Gastrocnemius medialis (tissue), 4 donors: ENCODE measurements at regions of chr9 and their contacts with region 1.

Region 1: DNA sequence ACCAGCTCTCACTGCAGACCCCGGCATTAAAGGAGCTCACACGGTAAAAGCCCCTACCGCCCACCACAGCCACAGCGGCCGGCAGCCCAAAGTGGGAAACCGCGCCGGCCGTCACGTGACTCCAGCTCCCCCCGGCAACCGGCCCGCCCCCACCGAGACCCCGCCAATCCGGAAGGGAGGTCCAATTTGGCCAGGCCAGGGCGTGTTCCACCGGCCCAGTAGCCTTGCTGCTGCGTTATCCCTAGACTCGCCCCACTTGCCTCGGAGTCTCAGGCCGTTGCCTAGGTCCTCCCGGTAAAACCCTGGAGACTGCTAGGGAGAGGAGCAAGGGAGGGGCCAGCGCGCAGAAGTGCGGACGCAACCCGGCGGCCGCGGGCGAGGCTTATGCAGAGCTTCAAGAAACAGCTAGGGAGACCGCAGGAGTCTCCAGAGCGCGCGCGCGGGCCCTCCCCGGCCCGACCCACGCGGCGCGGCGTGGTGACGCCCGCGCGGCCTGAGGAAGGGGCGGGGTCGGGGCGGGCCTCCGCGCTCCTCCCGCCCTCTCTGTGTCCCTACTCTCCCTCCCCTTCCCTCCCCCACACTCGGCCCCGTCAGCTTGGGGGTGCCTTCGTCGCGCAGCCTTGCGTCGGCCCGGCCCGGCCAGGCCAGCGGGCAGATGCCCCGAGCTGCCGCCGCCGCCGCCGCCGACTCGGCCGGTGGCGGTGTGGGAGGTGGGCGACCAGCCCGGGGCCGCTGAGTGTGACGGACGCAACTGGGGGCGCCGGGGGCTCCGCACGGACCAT is at the start of gene RIC1:
- DNase-seq: peak; percentile 91 to 92
- ATAC-seq: peak; percentile 62 to 63
- H3K4me3 ChIP-seq: peak within 1 kb of the TSS; percentile 70 to 97 (median 94)
- H3K27ac ChIP-seq: peak within 1 kb of the TSS; percentile 89 to 98 (median 93)
- H3K4me1 ChIP-seq: peaks cover 44 to 60% of the 10 kb centered on the region in 2 donors
- H3K27me3 ChIP-seq: no peaks in the 10 kb centered on the region
- CTCF ChIP-seq: peak in 2 of 5 experiments; percentile 29 to 55
- POLR2A ChIP-seq: peak; percentile 99
- total RNA-seq, gene RIC1: 34.0 to 153 (median 37.3) TPM

Region 2: GRCh38 chr9:4679268-4680172 is 949.2 kb before region 1 on chr9 and contains the start of gene CDC37L1:
- in situ Hi-C with region 1: loop called in 1 of 4 experiments (anchors 10 kb)
- intact Hi-C with region 1: loop called (anchors 5 kb)
- DNase-seq: peak; percentile 95 to 96
- ATAC-seq: peak; percentile 76 to 84
- H3K4me3 ChIP-seq: peak within 1 kb of the TSS; percentile 81 to 98 (median 88)
- H3K27ac ChIP-seq: peak within 1 kb of the TSS; percentile 91 to 99 (median 95)
- H3K4me1 ChIP-seq: peaks cover 40 to 44% of the 10 kb centered on the region in 2 donors
- H3K27me3 ChIP-seq: no peaks in the 10 kb centered on the region
- CTCF ChIP-seq: peak; percentile 72 to 88 (median 81)
- POLR2A ChIP-seq: peak; percentile 98 to 99
- total RNA-seq, gene CDC37L1: 91.1 to 157 (median 131) TPM

Region 3: DNA sequence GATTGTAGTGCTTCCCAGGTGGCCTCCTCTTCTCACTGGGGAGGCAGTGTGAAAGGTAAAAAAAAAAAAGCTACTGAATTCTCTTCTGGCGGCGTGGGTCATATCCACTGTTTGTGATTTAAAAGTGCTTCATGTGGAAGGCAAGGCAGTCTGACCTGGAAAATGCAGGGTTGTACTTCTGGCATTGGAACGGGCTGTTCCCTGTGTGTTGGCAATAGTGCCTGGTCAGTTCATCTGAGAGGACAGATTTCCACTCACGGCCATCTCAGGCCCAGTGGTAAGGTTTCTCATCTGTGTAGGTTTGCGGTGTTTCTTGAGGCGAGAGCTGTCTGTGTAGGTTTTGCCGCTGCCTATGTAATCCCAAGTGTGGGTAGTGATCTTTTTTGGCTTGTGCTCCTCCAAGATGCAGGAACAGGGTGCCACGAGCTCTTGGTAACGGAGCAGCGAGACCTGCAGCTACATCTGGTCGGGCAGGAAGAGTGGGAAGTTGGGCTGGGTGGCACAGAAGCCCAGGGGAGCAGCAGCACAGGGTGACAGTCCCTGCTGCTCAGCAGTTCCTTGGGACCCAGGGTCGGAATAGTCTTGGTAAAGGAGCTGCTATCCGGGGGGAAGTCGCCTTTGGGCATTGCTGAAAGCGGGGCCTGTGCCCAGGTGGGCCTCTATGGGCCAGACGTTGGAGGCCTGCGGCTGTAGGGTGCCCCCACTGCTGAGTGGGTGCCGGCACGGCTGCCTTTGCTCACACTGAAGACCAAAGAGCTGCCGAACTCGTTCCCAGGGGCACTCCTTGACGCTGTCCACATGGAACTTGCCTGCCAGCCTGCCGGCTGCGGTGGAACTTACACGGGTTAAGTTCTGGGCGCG is 824.8 kb before region 1 on chr9:
- in situ Hi-C with region 1: loop called in 1 of 4 experiments (anchors 25 kb)
- intact Hi-C with region 1: loop called (anchors 5 kb)
- DNase-seq: peak; percentile 71 to 78
- ATAC-seq: peak; percentile 76 to 83
- H3K4me3 ChIP-seq: peak overlapping the region; percentile 32 to 41 (median 35)
- H3K27ac ChIP-seq: peak overlapping the region; percentile 87 to 96 (median 91)
- H3K4me1 ChIP-seq: peaks cover 46 to 65% of the 10 kb centered on the region in 2 donors
- H3K27me3 ChIP-seq: no peaks in the 10 kb centered on the region
- CTCF ChIP-seq: no peak
- POLR2A ChIP-seq: peak; percentile 21 to 38

Region 4: DNA sequence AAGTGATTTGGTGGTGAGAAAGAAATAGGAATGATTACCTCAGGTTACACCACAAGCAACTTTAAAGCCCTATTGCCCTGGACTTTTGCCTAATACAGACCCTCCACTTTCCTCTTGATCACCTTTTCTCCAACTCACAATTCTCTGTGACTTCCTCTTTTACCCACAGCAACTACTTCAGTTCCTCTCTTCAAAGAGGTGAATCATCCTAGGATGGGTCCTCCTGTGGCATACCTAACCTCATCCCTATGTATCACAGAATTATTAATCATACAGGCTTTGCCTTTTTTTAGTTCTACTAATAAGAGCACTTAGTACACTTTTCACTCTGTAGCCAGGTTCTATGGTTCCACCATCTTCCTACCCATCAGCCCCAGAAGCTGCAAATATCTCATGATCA is 423.6 kb before region 1 on chr9:
- in situ Hi-C with region 1: no loop called
- intact Hi-C with region 1: no loop called
- DNase-seq: no peak
- ATAC-seq: no peak
- H3K4me3 ChIP-seq: no peak overlapping the region
- H3K27ac ChIP-seq: no peak overlapping the region
- H3K4me1 ChIP-seq: no peaks in the 10 kb centered on the region
- H3K27me3 ChIP-seq: no peaks in the 10 kb centered on the region
- CTCF ChIP-seq: no peak
- POLR2A ChIP-seq: no peak

Region 5: GRCh38 chr9:5593904-5594303 is 34.8 kb before region 1 on chr9:
- in situ Hi-C with region 1: no loop called
- intact Hi-C with region 1: no loop called
- DNase-seq: no peak
- ATAC-seq: no peak
- H3K4me3 ChIP-seq: no peak overlapping the region
- H3K27ac ChIP-seq: no peak overlapping the region
- H3K4me1 ChIP-seq: peaks cover 0 to 5% of the 10 kb centered on the region in 2 donors
- H3K27me3 ChIP-seq: no peaks in the 10 kb centered on the region
- CTCF ChIP-seq: no peak
- POLR2A ChIP-seq: no peak

Region 6: GRCh38 chr9:5608298-5609225 is 20.2 kb before region 1 on chr9:
- in situ Hi-C with region 1: no loop called
- intact Hi-C with region 1: loop called (anchors 2 kb)
- DNase-seq: peak; percentile 37 to 41
- ATAC-seq: peak; percentile 87 to 91
- H3K4me3 ChIP-seq: peak overlapping the region; percentile 46 to 56 (median 51)
- H3K27ac ChIP-seq: peak overlapping the region; percentile 77 to 86 (median 84)
- H3K4me1 ChIP-seq: peaks cover 28 to 36% of the 10 kb centered on the region in 2 donors
- H3K27me3 ChIP-seq: no peaks in the 10 kb centered on the region
- CTCF ChIP-seq: no peak
- POLR2A ChIP-seq: no peak

Region 7: GRCh38 chr9:5832543-5833529 is 204.1 kb after region 1 on chr9 and contains the start of gene ERMP1:
- in situ Hi-C with region 1: no loop called
- intact Hi-C with region 1: loop called (anchors 5 kb)
- DNase-seq: peak; percentile 65 to 84
- ATAC-seq: peak; percentile 74 to 91
- H3K4me3 ChIP-seq: peak within 1 kb of the TSS; percentile 63 to 98 (median 69)
- H3K27ac ChIP-seq: peak within 1 kb of the TSS; percentile 66 to 93 (median 87)
- H3K4me1 ChIP-seq: peaks cover 16 to 24% of the 10 kb centered on the region in 2 donors
- H3K27me3 ChIP-seq: no peaks in the 10 kb centered on the region
- CTCF ChIP-seq: peak; percentile 76 to 87 (median 81)
- POLR2A ChIP-seq: peak; percentile 54 to 71
- total RNA-seq, gene ERMP1: 4.4 to 7.4 (median 6.3) TPM

Region 8: GRCh38 chr9:6008169-6008979 is 379.7 kb after region 1 on chr9:
- in situ Hi-C with region 1: loop called in 1 of 4 experiments (anchors 25 kb)
- intact Hi-C with region 1: no loop called
- DNase-seq: peak; percentile 97 to 98
- ATAC-seq: peak; percentile 92 to 94
- H3K4me3 ChIP-seq: peak overlapping the region; percentile 81 to 96 (median 94)
- H3K27ac ChIP-seq: peak overlapping the region; percentile 96 to 99 (median 99)
- H3K4me1 ChIP-seq: peaks cover 56 to 71% of the 10 kb centered on the region in 2 donors
- H3K27me3 ChIP-seq: no peaks in the 10 kb centered on the region
- CTCF ChIP-seq: no peak
- POLR2A ChIP-seq: peak; percentile 62 to 69

Region 9: DNA sequence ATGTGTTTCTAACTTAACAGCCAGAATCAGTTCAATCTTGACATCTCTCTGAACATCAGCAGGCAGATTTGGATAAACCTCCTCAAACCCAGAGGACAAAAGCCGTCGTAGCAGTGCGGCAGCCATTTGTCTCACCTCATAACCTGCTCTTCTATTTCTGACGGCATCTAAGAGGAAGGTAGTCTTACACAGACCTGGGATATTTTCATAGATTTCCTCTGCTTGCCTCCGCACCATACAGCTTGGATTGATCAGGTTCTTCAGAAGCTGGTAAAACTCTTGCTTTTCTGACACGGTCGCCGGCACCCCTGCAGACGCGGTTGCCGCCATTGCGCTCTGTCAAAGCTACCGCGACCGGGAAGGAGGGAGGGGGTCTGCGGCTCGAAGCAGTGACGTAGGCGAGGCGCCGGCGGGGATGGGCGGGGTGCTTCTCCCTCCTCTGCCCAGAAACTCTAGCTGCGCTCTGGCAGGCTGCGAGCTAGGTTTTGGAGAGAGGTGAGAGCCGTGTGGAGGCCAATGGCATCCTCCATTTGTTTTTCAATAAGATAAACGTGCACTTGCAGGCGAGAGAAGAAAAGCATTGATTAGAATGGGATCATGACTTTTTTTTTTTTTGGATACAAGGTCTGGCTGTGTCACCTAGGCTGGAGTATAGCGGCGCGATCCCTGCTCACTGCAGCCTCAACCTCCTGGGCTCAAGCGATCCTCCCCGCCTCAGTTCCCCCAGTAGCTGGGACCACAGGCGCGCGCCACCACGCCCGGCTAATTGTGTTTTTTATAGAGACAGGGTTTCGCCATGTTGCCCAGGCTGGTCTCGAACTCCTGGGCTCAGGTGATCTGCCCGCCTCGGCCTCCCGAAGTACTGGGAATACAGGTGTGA is 386.8 kb after region 1 on chr9 and contains the start of gene RANBP6:
- in situ Hi-C with region 1: loop called in 1 of 4 experiments (anchors 25 kb)
- intact Hi-C with region 1: loop called (anchors 2 kb)
- DNase-seq: peak; percentile 85 to 86
- ATAC-seq: peak; percentile 98
- H3K4me3 ChIP-seq: peak within 1 kb of the TSS; percentile 73 to 89 (median 88)
- H3K27ac ChIP-seq: peak within 1 kb of the TSS; percentile 83 to 91 (median 86)
- H3K4me1 ChIP-seq: peaks cover 43 to 47% of the 10 kb centered on the region in 2 donors
- H3K27me3 ChIP-seq: no peaks in the 10 kb centered on the region
- CTCF ChIP-seq: no peak
- POLR2A ChIP-seq: peak; percentile 20 to 68
- total RNA-seq, gene RANBP6: 8.1 to 21.0 (median 16.9) TPM